ENCODE measurements at regions of chr19 and their contacts with region 1.

Region 1: DNA sequence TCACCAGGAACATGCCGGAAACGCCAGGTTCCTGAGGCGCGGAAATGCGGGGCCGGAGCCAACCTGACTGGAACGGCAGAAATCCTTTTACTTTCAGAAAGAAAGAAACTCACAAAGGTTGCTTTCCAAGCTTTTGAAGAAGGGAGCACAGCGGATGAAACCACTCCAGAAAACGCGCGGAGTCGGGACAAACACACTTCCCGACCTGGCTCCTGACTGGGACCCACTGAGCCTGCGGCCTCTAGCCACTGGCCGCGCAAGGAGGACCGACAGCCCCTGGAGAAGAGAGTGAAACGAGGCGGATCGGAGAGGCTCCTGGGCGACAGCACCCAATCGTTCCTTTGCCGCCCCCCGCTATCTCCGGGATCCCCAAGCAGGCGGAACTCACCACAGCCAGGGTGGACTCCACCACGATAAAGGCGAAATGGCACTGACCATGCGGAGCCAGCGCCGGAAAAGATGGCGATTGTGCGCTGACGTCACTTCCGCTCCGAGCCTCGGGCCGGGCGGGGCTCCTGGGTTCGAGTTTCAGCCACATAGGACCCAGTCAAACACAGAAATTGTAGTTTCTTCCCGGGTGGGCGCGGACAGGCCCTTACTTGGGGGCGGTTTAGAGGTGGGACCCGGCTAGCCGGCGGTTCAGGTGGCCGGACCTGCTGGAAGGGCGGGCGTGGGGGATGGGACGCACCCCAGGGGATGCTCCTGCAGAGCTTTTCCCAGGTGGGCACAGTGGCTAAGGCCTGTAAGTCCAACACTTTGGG is at the start of gene ZNF121:
- DNase-seq: peak; percentile 26 to 90
- H3K4me3 ChIP-seq: peak within 1 kb of the TSS; percentile 75 to 83
- H3K27ac ChIP-seq: peak within 1 kb of the TSS; percentile 91 to 92
- H3K4me1 ChIP-seq: peaks cover 0 to 9% of the 10 kb centered on the region in 2 donors
- H3K27me3 ChIP-seq: no peaks in the 10 kb centered on the region
- CTCF ChIP-seq: no peak
- total RNA-seq, gene ZNF121: 22.7 TPM

Region 2: DNA sequence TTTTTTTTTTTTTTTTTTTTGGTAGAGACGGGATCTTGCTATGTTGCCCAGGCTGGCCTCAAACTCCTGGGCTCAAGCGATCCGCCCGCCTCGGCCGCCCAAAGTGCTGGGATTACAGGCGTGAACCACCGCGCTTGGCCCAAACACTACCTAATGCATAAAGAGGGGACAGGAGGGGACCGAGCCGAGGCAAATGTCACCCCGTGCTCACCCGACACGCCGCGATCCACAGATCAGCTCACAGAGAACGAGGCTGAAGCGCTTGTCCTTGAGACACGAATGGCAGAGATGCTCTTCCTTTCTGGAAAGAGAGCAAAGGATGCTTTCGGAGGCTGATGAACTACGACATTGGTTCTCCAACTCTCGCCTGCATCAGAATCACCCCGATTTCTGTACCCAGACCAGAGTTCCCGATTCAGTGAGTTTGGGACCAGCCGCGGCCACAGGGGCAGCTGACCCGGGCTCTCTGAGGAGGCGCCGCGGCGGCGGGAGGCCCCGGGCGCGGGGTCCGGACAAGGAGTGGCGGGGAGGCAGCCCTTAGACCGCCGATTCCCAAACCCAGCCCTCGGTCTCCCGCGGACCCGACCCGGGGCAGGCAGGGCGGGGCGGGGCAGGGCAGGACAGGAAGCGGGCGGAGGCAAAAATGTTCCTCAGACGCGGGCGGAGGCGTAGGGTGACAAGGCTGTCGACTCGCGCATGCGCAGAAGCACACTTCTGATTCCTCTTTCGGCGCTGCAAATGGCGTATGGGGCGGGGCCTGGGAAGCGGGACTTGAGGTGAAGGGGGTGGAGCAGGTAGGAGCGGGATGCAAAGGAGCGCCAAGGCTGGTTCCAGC is 274.9 kb before region 1 on chr19 and contains the start of gene ZNF699:
- intact Hi-C with region 1: loop called (anchors 1 kb)
- DNase-seq: peak; percentile 91 to 99
- H3K4me3 ChIP-seq: peak within 1 kb of the TSS; percentile 73 to 87
- H3K27ac ChIP-seq: peak within 1 kb of the TSS; percentile 95 to 96
- H3K4me1 ChIP-seq: peaks cover 0 to 5% of the 10 kb centered on the region in 2 donors
- H3K27me3 ChIP-seq: no peaks in the 10 kb centered on the region
- CTCF ChIP-seq: no peak
- total RNA-seq, gene ZNF699: 6.8 TPM

Region 3: DNA sequence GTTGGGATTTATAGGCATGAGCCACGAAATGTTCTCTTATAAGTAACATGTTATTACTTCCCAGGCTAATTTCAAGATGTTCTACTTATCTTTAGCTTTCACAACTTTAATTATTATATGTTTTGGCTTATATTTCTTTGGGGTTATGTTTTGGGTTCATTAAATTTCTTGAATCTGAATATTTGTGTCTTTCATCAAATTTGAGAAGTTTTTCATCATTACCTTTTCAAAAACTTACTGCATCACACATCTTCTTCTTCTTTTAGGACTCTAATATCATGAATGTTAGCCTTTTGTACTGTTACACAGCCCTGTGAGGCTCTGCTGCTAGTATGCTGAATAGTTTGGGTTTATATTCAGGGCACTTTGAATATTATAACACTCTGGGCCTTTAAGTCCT is 139.2 kb before region 1 on chr19:
- intact Hi-C with region 1: no loop called
- DNase-seq: no peak
- H3K4me3 ChIP-seq: no peak overlapping the region
- H3K27ac ChIP-seq: no peak overlapping the region
- H3K4me1 ChIP-seq: no peaks in the 10 kb centered on the region
- H3K27me3 ChIP-seq: no peaks in the 10 kb centered on the region
- CTCF ChIP-seq: no peak

Region 4: GRCh38 chr19:9621156-9622037 is 37.1 kb after region 1 on chr19 and contains the start of gene ZNF561:
- intact Hi-C with region 1: loop called (anchors 1 kb)
- DNase-seq: peak; percentile 14 to 90
- H3K4me3 ChIP-seq: peak within 1 kb of the TSS; percentile 83 to 87
- H3K27ac ChIP-seq: peak within 1 kb of the TSS; percentile 89 to 91
- H3K4me1 ChIP-seq: peaks cover 0 to 17% of the 10 kb centered on the region in 2 donors
- H3K27me3 ChIP-seq: no peaks in the 10 kb centered on the region
- CTCF ChIP-seq: no peak
- total RNA-seq, gene ZNF561: 35.4 TPM